Mammary epithelial cell (primary cell): ENCODE measurements at regions of chr19 and their contacts with region 1.

Region 1: GRCh38 chr19:46661020-46661731 is at the start of gene DACT3:
- DNase-seq: peak; percentile 100
- H3K4me3 ChIP-seq: peak within 1 kb of the TSS; percentile 40 to 50 (median 42)
- H3K27ac ChIP-seq: peak within 1 kb of the TSS; percentile 48
- H3K4me1 ChIP-seq: peaks cover 9% of the 10 kb centered on the region
- H3K27me3 ChIP-seq: no peaks in the 10 kb centered on the region
- CTCF ChIP-seq: no peak
- total RNA-seq, gene DACT3: 0.31 to 0.33 TPM

Region 2: DNA sequence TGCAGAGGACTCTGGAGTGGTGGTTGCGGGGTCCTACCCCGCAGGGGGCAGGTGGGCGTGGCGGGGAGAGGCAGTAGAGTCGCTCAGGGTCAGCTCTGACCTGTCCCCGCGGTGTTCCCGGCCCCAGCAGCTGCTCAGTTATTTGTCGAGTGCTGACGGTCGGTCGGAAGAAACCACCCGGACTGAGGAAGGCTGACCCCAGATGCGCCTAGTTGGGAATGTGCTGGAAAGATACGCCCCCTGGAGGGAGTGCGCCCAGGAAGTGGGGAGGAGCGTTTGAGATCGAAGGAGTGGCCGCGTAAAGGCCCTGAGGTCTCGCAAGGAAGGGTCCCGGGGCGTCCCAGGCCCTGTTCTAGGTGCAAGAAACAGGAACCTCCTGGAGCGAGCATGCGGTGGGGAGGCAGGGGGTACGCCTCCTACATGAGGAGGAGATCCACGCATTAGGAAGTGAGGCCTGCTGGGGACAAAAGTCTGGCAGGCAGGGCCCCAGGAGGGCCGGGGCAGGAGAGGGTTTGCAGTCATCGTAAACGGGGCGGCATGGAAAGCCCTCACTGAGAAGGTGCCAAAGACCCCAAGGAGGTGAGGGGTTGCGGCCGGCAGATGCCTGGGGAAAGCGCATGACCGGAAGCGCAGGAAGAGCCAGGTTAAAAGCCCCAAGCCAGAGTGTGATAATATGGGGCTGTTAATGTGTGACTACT is 257.0 kb before region 1 on chr19:
- CTCF ChIA-PET with region 1: no interaction called
- dilution Hi-C with region 1: no loop called
- in situ Hi-C with region 1: no loop called
- intact Hi-C with region 1: loop called (anchors 10 kb)
- DNase-seq: no peak
- H3K4me3 ChIP-seq: peak overlapping the region; percentile 18 to 49 (median 19)
- H3K27ac ChIP-seq: peak overlapping the region; percentile 14
- H3K4me1 ChIP-seq: peaks cover 29% of the 10 kb centered on the region
- H3K27me3 ChIP-seq: no peaks in the 10 kb centered on the region
- CTCF ChIP-seq: peak in 1 of 2 donors; percentile 17

Region 3: DNA sequence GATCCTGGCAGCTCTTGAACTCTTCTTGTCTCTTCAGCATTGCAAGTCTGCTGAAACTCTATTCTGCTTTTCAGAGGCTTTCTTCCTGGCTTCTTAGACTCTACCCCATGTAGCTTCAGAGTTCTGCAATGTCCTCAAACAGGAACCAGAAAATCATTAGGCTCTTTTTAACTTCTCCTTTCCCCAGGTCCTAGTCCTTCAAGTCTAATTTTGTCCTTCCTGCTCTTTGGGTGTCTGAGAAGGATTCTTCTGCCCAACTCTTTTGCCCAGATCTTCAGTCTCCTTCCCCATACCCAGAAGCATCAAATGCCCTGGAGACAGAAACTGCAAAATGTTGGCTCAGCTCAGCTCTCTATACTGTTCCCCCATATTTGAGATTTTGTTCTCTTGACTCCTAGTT is 110.0 kb before region 1 on chr19:
- CTCF ChIA-PET with region 1: no interaction called
- dilution Hi-C with region 1: no loop called
- in situ Hi-C with region 1: no loop called
- intact Hi-C with region 1: no loop called
- DNase-seq: no peak
- H3K4me3 ChIP-seq: no peak overlapping the region
- H3K27ac ChIP-seq: no peak overlapping the region
- H3K4me1 ChIP-seq: no peaks in the 10 kb centered on the region
- H3K27me3 ChIP-seq: no peaks in the 10 kb centered on the region
- CTCF ChIP-seq: no peak

Region 4: GRCh38 chr19:46564701-46565100 is 96.5 kb before region 1 on chr19:
- CTCF ChIA-PET with region 1: no interaction called
- dilution Hi-C with region 1: loop called (anchors 5 kb)
- in situ Hi-C with region 1: no loop called
- intact Hi-C with region 1: no loop called
- DNase-seq: no peak
- H3K4me3 ChIP-seq: no peak overlapping the region
- H3K27ac ChIP-seq: no peak overlapping the region
- H3K4me1 ChIP-seq: no peaks in the 10 kb centered on the region
- H3K27me3 ChIP-seq: no peaks in the 10 kb centered on the region
- CTCF ChIP-seq: no peak

Region 5: DNA sequence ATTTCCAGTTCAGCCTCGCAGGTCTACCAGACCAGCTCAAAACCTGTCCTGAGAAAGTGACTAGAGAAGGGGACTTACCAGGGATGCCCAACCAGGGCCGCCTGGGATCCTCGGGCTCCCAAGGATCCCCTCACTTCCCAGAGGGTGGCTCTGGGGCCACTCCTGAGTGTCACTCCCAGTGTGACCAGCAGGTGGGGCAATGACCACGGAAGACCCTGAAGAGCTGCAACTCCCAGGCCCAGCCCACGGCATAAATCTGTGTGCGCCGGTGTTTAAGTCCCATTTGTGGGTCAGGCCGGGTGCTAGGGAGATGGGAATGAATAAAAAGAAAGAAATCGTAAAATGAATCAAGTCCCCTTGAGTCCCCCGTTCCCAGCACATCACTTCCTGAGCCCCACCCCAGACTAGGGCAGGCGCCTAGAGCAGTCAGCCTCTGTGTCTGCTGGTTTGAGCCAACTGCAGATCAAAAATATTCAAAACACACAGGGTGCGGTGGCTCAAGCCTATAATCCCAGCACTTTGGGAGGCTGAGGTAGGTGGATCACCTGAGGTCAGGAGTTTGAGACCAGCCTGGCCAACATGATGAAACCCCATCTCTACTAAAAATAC is 47.0 kb before region 1 on chr19:
- CTCF ChIA-PET with region 1: interaction called, 16 read pairs
- dilution Hi-C with region 1: no loop called
- in situ Hi-C with region 1: loop called (anchors 5 kb)
- intact Hi-C with region 1: loop called (anchors 1 kb)
- DNase-seq: peak; percentile 47
- H3K4me3 ChIP-seq: no peak overlapping the region
- H3K27ac ChIP-seq: no peak overlapping the region
- H3K4me1 ChIP-seq: no peaks in the 10 kb centered on the region
- H3K27me3 ChIP-seq: no peaks in the 10 kb centered on the region
- CTCF ChIP-seq: peak; percentile 63 to 86

Region 6: GRCh38 chr19:46624958-46625661 is 36.1 kb before region 1 on chr19 and contains the start of gene PTGIR:
- CTCF ChIA-PET with region 1: interaction called, 23 read pairs
- dilution Hi-C with region 1: loop called (anchors 5 kb)
- in situ Hi-C with region 1: no loop called
- intact Hi-C with region 1: no loop called
- DNase-seq: no peak
- H3K4me3 ChIP-seq: no peak within 1 kb of the TSS
- H3K27ac ChIP-seq: no peak within 1 kb of the TSS
- H3K4me1 ChIP-seq: no peaks in the 10 kb centered on the region
- H3K27me3 ChIP-seq: no peaks in the 10 kb centered on the region
- CTCF ChIP-seq: no peak
- total RNA-seq, gene PTGIR: under 0.01 TPM in 1 of 2 donors, not detected in the other

Region 7: GRCh38 chr19:46634045-46634655 is 27.0 kb before region 1 on chr19:
- CTCF ChIA-PET with region 1: interaction called, 23 read pairs
- dilution Hi-C with region 1: loop called (anchors 5 kb)
- in situ Hi-C with region 1: no loop called
- intact Hi-C with region 1: loop called (anchors 1 kb)
- DNase-seq: peak; percentile 85
- H3K4me3 ChIP-seq: peak overlapping the region; percentile 29 to 51 (median 39)
- H3K27ac ChIP-seq: no peak overlapping the region
- H3K4me1 ChIP-seq: peaks cover 31% of the 10 kb centered on the region
- H3K27me3 ChIP-seq: peaks cover 3% of the 10 kb centered on the region
- CTCF ChIP-seq: no peak

Region 8: DNA sequence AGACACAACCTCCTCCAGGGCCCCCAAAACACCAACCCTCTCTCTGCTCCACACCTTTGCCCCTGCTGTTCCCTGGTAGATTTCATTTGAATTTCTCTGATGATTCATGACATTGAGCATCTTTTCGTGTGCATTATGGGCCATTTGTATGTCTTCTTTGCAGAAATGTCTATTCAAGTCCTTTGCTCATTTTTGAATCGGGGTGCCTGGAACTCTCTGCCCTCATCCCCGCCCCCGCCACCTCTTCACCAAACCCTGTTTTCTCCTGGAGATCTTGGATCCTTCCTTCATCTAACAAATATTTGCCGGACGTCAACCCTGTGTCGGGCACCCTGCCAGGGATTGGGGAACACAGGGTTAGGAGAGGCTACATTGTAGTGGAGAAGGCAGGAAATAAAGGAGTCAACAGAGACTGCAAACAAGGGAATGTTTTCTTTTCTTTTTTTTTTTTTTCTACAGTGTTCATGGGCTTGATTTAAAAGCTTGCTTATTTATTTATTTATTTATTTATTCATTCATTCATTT is 152.7 kb after region 1 on chr19:
- CTCF ChIA-PET with region 1: no interaction called
- dilution Hi-C with region 1: no loop called
- in situ Hi-C with region 1: no loop called
- intact Hi-C with region 1: no loop called
- DNase-seq: no peak
- H3K4me3 ChIP-seq: no peak overlapping the region
- H3K27ac ChIP-seq: no peak overlapping the region
- H3K4me1 ChIP-seq: no peaks in the 10 kb centered on the region
- H3K27me3 ChIP-seq: no peaks in the 10 kb centered on the region
- CTCF ChIP-seq: no peak